ENCODE measurements at regions of chr1 and their contacts with region 1.

Region 1: GRCh38 chr1:11645670-11646265 is 8.5 kb downstream of the FBXO2 start:
- DNase-seq: peak; percentile 49
- H3K4me3 ChIP-seq: no peak overlapping the region
- H3K27ac ChIP-seq: no peak overlapping the region
- H3K4me1 ChIP-seq: no peaks in the 10 kb centered on the region
- H3K27me3 ChIP-seq: no peaks in the 10 kb centered on the region
- CTCF ChIP-seq: peak; percentile 71 to 78

Region 2: DNA sequence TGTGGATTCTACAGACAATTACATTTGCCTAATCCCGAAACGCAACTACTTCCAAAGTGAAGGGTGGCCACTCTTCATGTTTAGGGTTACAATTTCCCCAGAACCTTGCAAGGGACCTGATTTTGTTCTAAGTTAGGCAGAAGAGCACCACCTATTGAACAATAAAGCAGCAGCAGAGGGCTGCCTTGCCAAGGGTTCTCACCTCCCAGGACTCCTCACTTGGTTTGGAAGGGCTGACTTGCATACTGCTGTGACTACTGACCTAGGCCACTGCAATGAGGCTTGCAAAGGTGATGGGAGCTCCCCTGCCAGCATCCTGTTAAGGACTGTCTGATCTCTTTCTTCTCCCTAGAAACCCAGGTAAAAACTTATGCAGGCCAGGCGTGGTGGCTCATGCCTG is 397.6 kb before region 1 on chr1:
- CTCF ChIA-PET with region 1: no interaction called
- dilution Hi-C with region 1: loop called (anchors 5 kb)
- in situ Hi-C with region 1: loop called in 1 of 2 experiments (anchors 10 kb)
- intact Hi-C with region 1: no loop called
- DNase-seq: no peak
- H3K4me3 ChIP-seq: no peak overlapping the region
- H3K27ac ChIP-seq: no peak overlapping the region
- H3K4me1 ChIP-seq: no peaks in the 10 kb centered on the region
- H3K27me3 ChIP-seq: no peaks in the 10 kb centered on the region
- CTCF ChIP-seq: peak in 1 of 2 donors; percentile 16

Region 3: GRCh38 chr1:11285883-11286734 is 359.7 kb before region 1 on chr1:
- CTCF ChIA-PET with region 1: no interaction called
- dilution Hi-C with region 1: no loop called
- in situ Hi-C with region 1: loop called in 1 of 2 experiments (anchors 25 kb)
- intact Hi-C with region 1: loop called (anchors 1 kb)
- DNase-seq: no peak
- H3K4me3 ChIP-seq: no peak overlapping the region
- H3K27ac ChIP-seq: no peak overlapping the region
- H3K4me1 ChIP-seq: no peaks in the 10 kb centered on the region
- H3K27me3 ChIP-seq: no peaks in the 10 kb centered on the region
- CTCF ChIP-seq: peak; percentile 23 to 44

Region 4: DNA sequence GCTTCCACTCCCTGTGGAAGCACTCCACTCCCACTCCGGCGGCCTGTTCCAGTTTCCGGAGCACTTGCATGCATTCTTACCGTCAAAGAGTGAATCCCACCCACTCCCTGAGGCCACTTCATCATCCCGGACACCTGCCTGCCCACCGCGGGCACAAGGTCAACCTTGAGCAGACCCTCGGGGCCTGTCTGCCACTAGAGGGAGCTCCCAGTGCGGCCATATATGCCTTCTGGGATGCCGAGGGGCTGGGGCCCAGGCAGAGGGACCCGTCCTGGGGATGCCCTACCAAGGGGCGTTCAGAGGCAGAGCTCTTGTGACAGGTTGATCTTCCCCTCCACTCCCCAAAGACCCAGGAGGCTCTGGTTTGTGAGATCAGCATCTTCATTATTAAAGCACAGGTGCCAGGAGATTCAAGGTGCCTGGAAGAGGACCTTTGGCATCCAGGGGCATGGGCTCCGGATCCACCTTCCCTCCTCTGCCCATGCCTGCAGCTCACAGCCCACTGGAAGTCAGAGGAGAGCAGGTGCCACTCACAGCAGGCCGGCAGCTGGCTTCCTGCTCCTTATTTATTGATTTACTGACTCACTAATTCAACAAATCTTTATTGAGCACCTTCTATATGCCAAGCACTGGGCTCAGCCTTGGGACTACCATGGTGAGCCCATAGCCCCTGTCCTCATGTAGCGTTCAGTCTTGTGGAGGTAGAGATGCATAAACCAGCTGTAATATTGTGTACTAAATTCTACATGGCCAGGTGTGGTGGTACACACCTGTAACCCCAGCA is 325.4 kb before region 1 on chr1:
- CTCF ChIA-PET with region 1: no interaction called
- dilution Hi-C with region 1: no loop called
- in situ Hi-C with region 1: no loop called
- intact Hi-C with region 1: loop called (anchors 1 kb)
- DNase-seq: no peak
- H3K4me3 ChIP-seq: no peak overlapping the region
- H3K27ac ChIP-seq: no peak overlapping the region
- H3K4me1 ChIP-seq: peaks cover 18% of the 10 kb centered on the region
- H3K27me3 ChIP-seq: no peaks in the 10 kb centered on the region
- CTCF ChIP-seq: peak; percentile 34 to 51

Region 5: DNA sequence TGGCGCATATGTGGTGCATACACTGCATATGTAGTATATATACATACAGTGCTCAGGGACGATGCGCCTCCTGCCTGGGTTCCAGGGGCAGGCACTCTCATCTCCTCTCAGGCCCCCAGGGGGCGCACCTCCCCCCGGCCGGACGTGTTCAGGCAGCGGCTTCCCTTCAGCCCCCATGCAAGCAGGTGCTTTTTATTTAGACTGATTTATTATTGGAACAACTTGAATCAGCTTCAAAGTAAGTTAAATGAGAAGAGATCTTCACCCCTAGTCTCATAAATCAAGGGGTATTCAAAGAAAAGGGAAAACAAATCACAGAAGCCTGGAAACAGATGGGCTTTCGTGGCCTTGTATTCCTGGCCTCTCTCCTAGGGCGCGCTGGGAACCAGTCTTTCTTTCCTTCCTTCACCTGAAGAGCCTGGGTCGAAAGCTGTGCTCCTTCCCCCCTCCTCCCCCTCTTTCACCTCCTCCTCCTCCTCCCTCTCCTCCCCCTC is 308.1 kb before region 1 on chr1:
- CTCF ChIA-PET with region 1: no interaction called
- dilution Hi-C with region 1: no loop called
- in situ Hi-C with region 1: no loop called
- intact Hi-C with region 1: loop called (anchors 1 kb)
- DNase-seq: no peak
- H3K4me3 ChIP-seq: no peak overlapping the region
- H3K27ac ChIP-seq: no peak overlapping the region
- H3K4me1 ChIP-seq: peaks cover 10% of the 10 kb centered on the region
- H3K27me3 ChIP-seq: no peaks in the 10 kb centered on the region
- CTCF ChIP-seq: peak; percentile 46 to 66

Region 6: DNA sequence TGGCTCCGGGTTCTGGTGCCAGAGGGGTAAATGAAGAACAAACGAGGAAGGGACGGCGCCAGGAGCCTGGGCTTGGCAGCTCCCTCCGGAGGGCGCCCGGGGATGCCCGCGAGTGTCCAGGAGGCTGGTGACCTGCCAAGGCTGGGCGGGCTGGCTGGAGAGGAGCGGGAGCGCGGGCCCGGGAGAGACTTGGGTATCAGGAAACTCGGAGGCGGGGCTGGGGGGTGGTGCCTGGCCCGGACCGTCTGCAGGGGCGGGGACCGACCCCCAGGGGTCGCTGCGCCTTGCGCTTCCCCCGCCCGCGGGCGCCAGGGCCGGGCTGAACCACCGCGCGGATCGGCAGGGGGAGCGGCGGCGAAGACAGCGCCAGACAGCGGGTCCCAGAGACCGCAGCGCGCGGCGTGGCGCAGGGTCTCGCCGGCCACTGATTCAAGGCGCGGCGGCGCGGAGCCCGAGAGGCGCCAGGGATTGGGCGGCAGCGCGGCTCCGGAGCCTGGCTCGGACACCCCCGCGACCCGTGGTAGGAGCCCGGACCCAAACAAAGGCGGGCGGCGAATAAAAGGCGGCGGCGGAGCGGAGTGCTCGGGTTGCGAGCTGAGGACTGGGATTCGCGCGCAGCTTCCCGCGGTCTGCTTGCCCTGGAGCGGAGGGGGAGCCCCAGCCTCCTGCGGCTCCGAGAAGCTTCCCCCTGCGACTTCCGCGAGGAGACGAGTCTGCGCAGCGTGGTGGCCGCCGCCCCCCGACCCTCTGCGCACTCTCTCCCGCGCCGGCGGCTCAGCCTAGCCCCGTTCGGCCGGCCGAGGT is 167.0 kb before region 1 on chr1 and contains the start of gene DISP3:
- CTCF ChIA-PET with region 1: no interaction called
- dilution Hi-C with region 1: no loop called
- in situ Hi-C with region 1: no loop called
- intact Hi-C with region 1: loop called (anchors 1 kb)
- DNase-seq: peak; percentile 63
- H3K4me3 ChIP-seq: peak within 1 kb of the TSS; percentile 48 to 60 (median 54)
- H3K27ac ChIP-seq: no peak within 1 kb of the TSS
- H3K4me1 ChIP-seq: peaks cover 6% of the 10 kb centered on the region
- H3K27me3 ChIP-seq: peaks cover 10% of the 10 kb centered on the region
- CTCF ChIP-seq: peak; percentile 43 to 56
- total RNA-seq, gene DISP3: under 0.01 to 0.14 TPM

Measured in mammary epithelial cell (primary cell).